Naive thymus-derived CD8-positive, alpha-beta T cell (primary cell): ENCODE measurements at regions of chr5 and their contacts with region 1.

Region 1: GRCh38 chr5:149526845-149527580 is 24.2 kb downstream of the CSNK1A1 start:
- DNase-seq: no peak
- ATAC-seq: no peak
- H3K4me3 Mint-ChIP-seq: peak overlapping the region in 9 of 10 donors; percentile 21 to 66 (median 39)
- H3K27ac Mint-ChIP-seq: peak overlapping the region in 9 of 10 donors; percentile 26 to 74 (median 49)
- H3K4me1 Mint-ChIP-seq: peaks cover 35 to 92% (median 87%) of the 10 kb centered on the region in 4 donors
- H3K27me3 Mint-ChIP-seq: no peaks in the 10 kb centered on the region

Region 2: DNA sequence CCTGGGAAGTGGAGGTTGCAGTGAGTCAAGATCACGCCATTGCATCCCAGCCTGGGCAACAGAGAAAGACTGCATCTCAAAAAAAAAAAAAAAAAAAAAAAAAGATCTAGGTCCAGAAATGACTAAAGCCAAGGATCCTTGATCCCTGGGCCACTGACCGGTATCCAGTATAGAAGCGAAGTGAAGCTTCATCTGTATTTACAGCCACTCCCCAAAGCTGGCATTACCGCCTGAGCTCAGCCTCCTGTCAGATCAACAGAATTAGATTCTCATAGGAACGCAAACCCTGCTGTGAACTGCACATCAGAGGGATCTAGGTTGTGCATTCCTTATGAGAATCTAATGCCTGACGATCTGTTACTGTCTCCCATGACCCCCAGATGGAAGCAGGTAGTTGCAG is 14.9 kb after region 1 on chr5:
- POLR2A ChIA-PET with region 1: interaction called, 16 read pairs
- DNase-seq: no peak
- ATAC-seq: no peak
- H3K4me3 Mint-ChIP-seq: peak overlapping the region in 9 of 10 donors; percentile 9 to 70 (median 61)
- H3K27ac Mint-ChIP-seq: peak overlapping the region in 2 of 10 donors; percentile 29 to 36
- H3K4me1 Mint-ChIP-seq: peaks cover 13 to 79% (median 64%) of the 10 kb centered on the region in 4 donors
- H3K27me3 Mint-ChIP-seq: no peaks in the 10 kb centered on the region

Region 3: GRCh38 chr5:149581192-149581861 is 54.3 kb after region 1 on chr5 and contains the start of gene ARHGEF37:
- POLR2A ChIA-PET with region 1: no interaction called
- DNase-seq: peak in 8 of 10 donors; percentile 20 to 54 (median 36)
- ATAC-seq: peak; percentile 94 to 98
- H3K4me3 Mint-ChIP-seq: peak within 1 kb of the TSS; percentile 73 to 87 (median 80)
- H3K27ac Mint-ChIP-seq: peak within 1 kb of the TSS in 5 of 10 donors; percentile 22 to 69 (median 49)
- H3K4me1 Mint-ChIP-seq: peaks cover 0 to 13% (median 7%) of the 10 kb centered on the region in 4 donors
- H3K27me3 Mint-ChIP-seq: peaks cover 0 to 7% (median 0%) of the 10 kb centered on the region in 5 donors
- polyA plus RNA-seq, gene ARHGEF37: not detected